G401 (cell line): ENCODE measurements at regions of chr9 and their contacts with region 1.

Region 1: DNA sequence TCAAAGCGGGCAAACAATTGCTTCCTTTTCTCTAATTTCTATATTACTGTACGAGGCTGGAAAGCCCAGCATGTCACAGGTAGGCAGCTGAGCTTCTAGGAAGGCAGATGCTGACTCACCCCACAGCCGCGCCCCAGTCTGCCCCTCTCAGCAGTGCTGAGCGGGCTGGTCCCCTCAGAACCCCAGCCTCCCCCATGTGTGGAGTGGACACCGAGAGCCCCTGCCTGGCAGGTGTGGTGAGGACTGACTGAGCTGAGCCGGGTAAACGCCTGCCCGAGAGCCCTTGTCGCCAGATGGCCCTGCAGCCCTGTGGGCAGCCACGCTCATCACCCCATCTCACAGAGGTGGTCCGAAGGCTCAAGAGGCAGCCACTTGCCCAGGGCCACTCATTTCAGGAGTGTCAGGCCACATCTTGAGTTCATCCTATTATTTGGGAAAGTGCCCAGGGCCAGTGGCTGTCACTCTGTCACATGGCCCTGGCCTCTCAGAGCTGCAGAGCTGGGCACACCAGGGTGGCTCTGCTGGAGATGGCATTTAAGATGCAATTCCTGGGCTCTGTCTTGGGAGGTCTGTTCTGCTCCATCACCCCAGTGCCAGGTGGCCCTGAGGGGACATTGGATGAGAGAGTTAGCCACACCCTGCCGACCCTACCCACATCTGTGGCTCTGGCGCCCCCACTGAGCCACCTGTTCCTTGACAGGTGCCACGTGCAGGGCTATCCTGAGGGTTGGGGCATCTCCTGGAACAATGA is 12.4 kb downstream of the CARD19 start:
- DNase-seq: no peak

Region 2: DNA sequence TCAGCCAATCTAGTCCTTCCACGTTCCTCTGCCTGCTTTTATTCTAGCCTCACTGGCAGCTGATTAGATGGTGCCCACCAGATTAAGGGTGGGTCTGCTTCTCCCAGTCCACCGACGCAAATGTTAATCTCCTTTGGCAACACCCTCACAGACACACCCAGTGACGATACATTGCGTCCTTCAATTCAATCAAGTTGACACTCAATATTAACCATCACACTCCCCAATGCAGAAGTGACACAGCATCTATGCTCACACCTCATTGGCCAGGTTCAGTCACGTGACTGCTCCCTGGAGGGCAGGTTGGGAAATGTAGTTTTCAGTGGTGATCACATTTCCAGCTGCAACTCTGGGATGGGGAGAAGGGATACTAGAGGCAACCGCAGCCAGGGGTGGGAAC is 37.0 kb before region 1 on chr9:
- in situ Hi-C with region 1: no loop called
- DNase-seq: no peak

Region 3: GRCh38 chr9:93159601-93160471 is 51.4 kb after region 1 on chr9:
- in situ Hi-C with region 1: loop called (anchors 10 kb)
- DNase-seq: peak; percentile 87

Region 4: DNA sequence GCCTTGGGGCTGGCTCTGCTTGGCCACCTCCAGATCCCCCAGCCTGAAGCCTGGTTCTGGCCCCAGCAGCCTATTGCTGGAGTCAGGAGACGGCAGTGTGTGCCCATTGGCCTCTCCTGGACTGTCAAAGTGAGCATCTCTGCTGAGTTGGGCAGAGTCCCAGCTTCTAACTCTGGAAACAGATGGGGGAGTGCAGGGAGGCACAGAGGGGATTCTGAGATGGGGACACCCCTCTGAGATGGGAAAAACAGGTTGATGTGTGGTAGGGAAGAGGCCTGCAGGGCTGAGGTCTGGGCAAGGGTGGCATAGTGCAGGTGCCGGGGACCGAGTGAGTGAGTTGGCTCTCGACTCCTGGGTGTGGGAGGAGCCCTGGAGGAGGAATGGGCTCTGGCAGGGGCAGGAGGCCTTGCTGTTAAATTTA is 495.4 kb after region 1 on chr9:
- in situ Hi-C with region 1: no loop called
- DNase-seq: peak; percentile 86